Transverse colon (tissue), 4 donors: ENCODE measurements at regions of chr5 and their contacts with region 1.

Region 1: DNA sequence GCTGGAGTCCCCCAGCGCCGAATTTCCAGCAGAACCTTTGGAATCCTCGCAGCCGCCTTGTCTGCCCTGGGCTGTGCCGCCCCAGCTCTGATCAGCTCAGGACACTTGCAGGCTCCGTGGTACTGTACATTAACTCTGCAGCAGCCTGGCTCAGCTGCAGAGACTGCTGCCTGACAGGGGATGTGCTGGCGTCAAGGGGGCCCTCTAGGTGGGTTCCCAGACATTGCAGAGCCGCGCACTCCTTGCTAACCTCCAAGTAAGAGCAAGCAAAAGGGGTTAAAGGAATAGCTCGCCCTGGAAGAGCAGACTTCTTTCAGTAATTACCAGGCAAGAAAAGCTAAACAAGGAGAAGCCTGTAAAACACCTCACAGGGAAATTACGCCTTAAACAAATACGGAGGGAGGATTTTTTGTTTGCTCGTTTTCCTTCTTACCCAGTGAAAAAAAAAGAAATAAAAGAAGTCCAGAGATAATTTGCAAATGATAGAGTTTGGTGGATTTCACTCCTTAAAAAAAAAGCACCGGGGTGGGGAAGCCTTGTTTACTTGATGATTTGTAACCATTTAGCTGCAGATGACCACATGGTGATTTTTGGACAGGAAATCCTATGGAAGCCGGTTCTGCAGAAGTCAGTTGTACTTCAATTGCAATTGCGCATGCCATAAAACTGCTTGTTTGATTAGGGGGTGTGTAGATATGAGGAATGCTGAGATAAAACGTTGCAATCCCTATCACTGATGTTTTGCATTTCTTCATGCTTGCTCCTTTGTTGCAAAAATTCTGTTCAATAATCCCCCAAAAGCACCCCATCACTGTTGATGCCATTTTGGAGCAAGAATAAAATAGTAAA is 305.8 kb downstream of the PDE4D start:
- DNase-seq: peak; percentile 79
- H3K4me3 ChIP-seq: peak overlapping the region in 3 of 4 donors; percentile 24 to 44 (median 39)
- H3K27ac ChIP-seq: peak overlapping the region; percentile 68 to 84 (median 78)
- H3K4me1 ChIP-seq: peaks cover 10 to 62% (median 38%) of the 10 kb centered on the region in 4 donors
- H3K27me3 ChIP-seq: no peaks in the 10 kb centered on the region
- CTCF ChIP-seq: peak in 3 of 5 experiments; percentile 10 to 23 (median 19)
- EP300 ChIP-seq: no peak
- POLR2A ChIP-seq: peak; percentile 71

Region 2: DNA sequence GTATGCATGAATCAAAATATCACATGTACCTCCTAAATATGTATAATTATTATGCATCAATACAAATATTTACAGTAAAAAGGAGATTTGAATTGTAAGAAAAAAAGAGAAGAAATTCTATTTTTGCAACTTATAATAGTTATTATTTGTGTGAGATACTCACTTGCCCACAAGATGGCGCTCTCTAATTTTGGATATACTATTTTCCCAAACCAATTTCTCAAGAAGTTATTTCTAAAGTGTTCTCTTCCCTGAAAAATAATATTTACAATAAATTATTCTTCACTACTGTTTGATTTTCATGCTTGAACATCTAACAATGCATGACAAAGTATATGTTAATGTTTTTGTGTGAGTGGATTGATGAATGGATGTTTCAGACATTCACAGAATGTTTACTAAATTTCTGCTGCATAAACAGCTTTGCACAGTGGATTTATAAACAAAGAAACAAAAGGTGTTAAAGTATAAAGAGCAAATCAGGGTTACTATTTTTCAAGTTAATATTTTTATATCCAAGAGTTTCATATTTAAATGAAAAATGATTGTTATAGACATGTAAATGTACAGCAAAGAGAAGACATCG is 197.5 kb before region 1 on chr5:
- in situ Hi-C with region 1: no loop called
- intact Hi-C with region 1: no loop called
- DNase-seq: no peak
- H3K4me3 ChIP-seq: no peak overlapping the region
- H3K27ac ChIP-seq: no peak overlapping the region
- H3K4me1 ChIP-seq: peaks cover 0 to 9% (median 0%) of the 10 kb centered on the region in 4 donors
- H3K27me3 ChIP-seq: no peaks in the 10 kb centered on the region
- CTCF ChIP-seq: peak; percentile 57 to 79 (median 73)
- EP300 ChIP-seq: no peak
- POLR2A ChIP-seq: no peak

Region 3: GRCh38 chr5:59548807-59549357 is 38.8 kb before region 1 on chr5:
- in situ Hi-C with region 1: no loop called
- intact Hi-C with region 1: no loop called
- DNase-seq: no peak
- H3K4me3 ChIP-seq: no peak overlapping the region
- H3K27ac ChIP-seq: no peak overlapping the region
- H3K4me1 ChIP-seq: peaks cover 10 to 21% (median 12%) of the 10 kb centered on the region in 4 donors
- H3K27me3 ChIP-seq: no peaks in the 10 kb centered on the region
- CTCF ChIP-seq: no peak
- EP300 ChIP-seq: no peak
- POLR2A ChIP-seq: no peak

Region 4: DNA sequence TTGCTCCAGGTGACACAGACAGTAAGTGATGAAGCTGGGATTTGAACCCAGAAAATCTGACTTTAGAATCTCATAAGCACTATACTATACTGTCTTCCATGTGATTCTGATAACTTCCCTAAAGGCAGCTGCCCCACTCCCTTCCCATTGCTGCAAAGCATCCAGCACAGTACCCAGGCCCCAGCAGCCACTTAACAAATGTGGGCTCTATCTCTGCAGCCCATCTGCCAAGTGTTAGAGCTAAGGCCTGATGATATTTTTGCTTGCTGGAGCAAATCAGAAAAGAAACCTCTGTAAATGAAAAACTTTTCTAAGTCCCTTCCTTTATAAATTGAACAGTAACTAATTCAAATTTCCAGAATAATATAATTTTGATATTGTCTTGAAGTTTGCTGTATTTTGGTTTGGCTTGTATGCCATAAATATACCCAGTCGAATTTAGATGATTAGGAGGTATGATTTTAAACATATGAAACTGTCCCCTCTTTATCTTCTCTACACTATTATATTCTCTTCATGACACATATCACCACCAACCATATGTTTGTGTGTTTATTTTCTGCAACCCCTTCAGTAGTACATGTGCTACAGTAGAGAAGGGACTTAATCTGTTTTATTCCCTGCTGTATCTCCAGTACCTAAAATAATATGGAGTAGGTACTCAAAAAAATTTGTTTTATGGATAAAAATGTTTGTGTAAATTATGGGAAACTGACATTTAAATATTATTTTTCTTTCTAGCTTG is 1510.7 kb after region 1 on chr5:
- in situ Hi-C with region 1: no loop called
- intact Hi-C with region 1: loop called (anchors 10 kb)
- DNase-seq: no peak
- H3K4me3 ChIP-seq: no peak overlapping the region
- H3K27ac ChIP-seq: no peak overlapping the region
- H3K4me1 ChIP-seq: no peaks in the 10 kb centered on the region
- H3K27me3 ChIP-seq: no peaks in the 10 kb centered on the region
- CTCF ChIP-seq: no peak
- EP300 ChIP-seq: no peak
- POLR2A ChIP-seq: no peak